GM12878 (cell line): ENCODE measurements at regions of chr6 and their contacts with region 1.

Region 1: DNA sequence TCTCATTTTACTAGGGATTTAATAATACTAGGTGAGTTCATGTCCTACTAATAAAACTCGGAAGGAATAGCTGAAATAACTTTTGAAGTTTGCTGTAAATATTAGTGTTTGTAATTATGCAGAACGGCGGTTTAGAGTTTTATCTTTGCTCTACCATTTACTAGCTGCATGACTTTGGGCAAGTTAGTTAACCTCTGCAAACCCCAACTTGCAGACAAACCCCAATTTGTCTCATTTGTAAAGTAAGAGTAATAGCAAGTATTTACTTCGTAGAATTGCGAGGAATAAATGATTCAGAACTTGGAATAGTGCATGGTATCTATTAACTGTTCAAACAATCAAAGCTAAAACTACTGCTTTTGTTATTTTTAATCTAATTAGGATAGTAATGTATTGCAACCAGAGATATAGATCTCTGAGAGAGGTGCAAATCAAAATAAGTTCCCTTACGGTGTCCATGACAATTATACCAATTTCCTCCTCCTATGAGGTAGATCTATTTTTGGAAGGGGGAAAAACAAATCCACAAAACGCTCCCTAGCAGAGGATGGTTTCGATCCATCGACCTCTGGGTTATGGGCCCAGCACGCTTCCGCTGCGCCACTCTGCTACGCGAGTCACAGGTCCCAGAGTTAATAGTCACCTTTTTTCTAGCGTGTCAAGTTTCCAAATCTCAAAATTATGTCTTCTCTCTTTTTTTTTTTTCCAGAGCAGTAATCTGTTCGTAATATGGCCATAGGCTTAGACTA is 35.1 kb upstream of the BTN3A2 start:
- DNase-seq: no peak
- ATAC-seq: peak; percentile 54
- H3K4me3 ChIP-seq: peak overlapping the region; percentile 83
- H3K27ac ChIP-seq: no peak overlapping the region
- H3K4me1 ChIP-seq: no peaks in the 10 kb centered on the region
- H3K27me3 ChIP-seq: no peaks in the 10 kb centered on the region
- CTCF ChIP-seq: no peak
- EP300 ChIP-seq: peak in 1 of 2 experiments; percentile 57; a peak in 1 of 4 replicates
- POLR2A ChIP-seq: no peak
- RAD21 ChIP-seq: no peak

Region 2: DNA sequence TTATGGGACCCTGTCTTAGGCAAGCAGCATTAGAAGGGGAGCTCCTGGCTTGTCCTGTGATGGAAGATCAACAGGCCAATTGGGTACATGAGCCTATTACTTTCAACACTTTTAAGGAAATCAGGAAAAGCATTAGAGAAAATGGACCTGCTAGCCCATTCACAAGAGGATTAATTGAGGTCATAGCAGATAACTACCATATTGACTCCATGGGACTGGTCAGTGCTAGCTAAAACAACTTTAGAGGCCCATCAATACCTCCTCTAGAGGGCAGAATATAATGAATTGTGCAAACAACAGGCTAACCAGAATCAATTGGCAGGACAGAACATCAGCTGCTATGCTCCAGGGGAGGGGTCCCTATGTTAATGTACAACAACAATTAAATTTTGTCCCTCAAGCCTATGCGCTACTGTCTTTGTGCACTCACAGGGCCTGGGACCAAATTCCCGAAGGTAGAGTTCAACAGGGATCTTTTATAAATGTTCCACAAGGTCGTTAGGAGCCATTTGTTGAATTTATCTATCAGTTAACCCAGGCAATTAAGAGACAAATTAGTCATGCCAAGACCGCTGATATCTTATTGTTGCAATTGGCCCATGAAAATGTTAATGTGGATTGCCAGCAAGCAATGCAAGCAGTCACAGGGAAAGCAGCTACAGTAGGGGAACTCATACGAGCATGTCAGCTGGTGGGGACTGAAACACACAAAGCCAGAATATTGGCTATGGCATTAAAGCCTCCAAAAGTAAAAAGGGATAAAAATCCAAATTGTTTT is 71.5 kb before region 1 on chr6:
- CTCF ChIA-PET with region 1: interaction called, 11 read pairs
- POLR2A ChIA-PET with region 1: no interaction called
- RAD21 ChIA-PET with region 1: interaction called, 5 read pairs
- SMC1A ChIA-PET with region 1: interaction called, 3 read pairs
- in situ Hi-C with region 1: no loop called
- intact Hi-C with region 1: no loop called
- DNase-seq: no peak
- ATAC-seq: peak; percentile 69
- H3K4me3 ChIP-seq: no peak overlapping the region
- H3K27ac ChIP-seq: no peak overlapping the region
- H3K4me1 ChIP-seq: peaks cover 2% of the 10 kb centered on the region; the same call in 1 of the 2 replicates
- H3K27me3 ChIP-seq: no peaks in the 10 kb centered on the region
- CTCF ChIP-seq: peak; percentile 23 to 34 (median 29); a peak in 4 of 6 replicates
- EP300 ChIP-seq: no peak
- POLR2A ChIP-seq: no peak
- RAD21 ChIP-seq: 0 out of 2 replicates have a peak, but pooled peaks have one; percentile 9

Region 3: GRCh38 chr6:26532699-26533531 is 203.0 kb after region 1 on chr6:
- CTCF ChIA-PET with region 1: interaction called, 6 read pairs
- POLR2A ChIA-PET with region 1: interaction called, 10 read pairs
- RAD21 ChIA-PET with region 1: interaction called, 7 read pairs
- SMC1A ChIA-PET with region 1: interaction called, 10 read pairs
- in situ Hi-C with region 1: no loop called
- intact Hi-C with region 1: no loop called
- DNase-seq: peak; percentile 99
- ATAC-seq: peak; percentile 59
- H3K4me3 ChIP-seq: peak overlapping the region; percentile 79
- H3K27ac ChIP-seq: peak overlapping the region; percentile 73
- H3K4me1 ChIP-seq: peaks cover 17% of the 10 kb centered on the region
- H3K27me3 ChIP-seq: no peaks in the 10 kb centered on the region
- CTCF ChIP-seq: no peak
- EP300 ChIP-seq: peak in 1 of 2 experiments; percentile 55; a peak in 1 of 4 replicates
- POLR2A ChIP-seq: no peak
- RAD21 ChIP-seq: no peak

Region 4: GRCh38 chr6:26537846-26538571 is 208.1 kb after region 1 on chr6 and contains the start of gene HMGN4:
- CTCF ChIA-PET with region 1: interaction called, 6 read pairs
- POLR2A ChIA-PET with region 1: interaction called, 10 read pairs
- RAD21 ChIA-PET with region 1: interaction called, 7 read pairs
- SMC1A ChIA-PET with region 1: interaction called, 10 read pairs
- in situ Hi-C with region 1: no loop called
- intact Hi-C with region 1: no loop called
- DNase-seq: peak; percentile 96
- ATAC-seq: peak; percentile 81
- H3K4me3 ChIP-seq: peak within 1 kb of the TSS; percentile 86
- H3K27ac ChIP-seq: peak within 1 kb of the TSS; percentile 99
- H3K4me1 ChIP-seq: peaks cover 14% of the 10 kb centered on the region
- H3K27me3 ChIP-seq: no peaks in the 10 kb centered on the region
- CTCF ChIP-seq: 0 out of 6 replicates have a peak, but pooled peaks of 1 of the 3 experiments have one; percentile 8
- EP300 ChIP-seq: peak in 1 of 2 experiments; percentile 74; a peak in 1 of 4 replicates
- POLR2A ChIP-seq: peak; percentile 84
- RAD21 ChIP-seq: no peak
- polyA plus RNA-seq, gene HMGN4: 26.7 to 31.2 TPM

Region 5: DNA sequence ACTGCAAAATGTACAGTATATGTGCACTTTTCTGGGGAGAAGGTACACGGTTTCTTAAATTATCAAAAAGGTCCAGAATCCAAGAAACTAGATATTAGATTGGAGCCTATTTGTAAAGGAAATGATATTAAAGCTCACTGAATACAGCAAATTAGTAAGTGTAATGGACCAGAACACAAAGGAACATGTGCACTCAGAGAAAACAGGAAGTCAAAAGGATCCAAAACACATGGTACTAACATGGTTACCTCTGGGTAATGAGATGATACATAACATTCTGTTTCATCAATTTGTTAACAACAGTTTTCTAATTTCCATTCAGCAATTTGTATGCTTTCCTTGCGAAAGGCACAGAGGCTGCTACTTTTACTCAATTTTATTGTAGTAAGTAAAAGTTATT is 310.9 kb after region 1 on chr6:
- CTCF ChIA-PET with region 1: no interaction called
- POLR2A ChIA-PET with region 1: no interaction called
- RAD21 ChIA-PET with region 1: no interaction called
- SMC1A ChIA-PET with region 1: no interaction called
- in situ Hi-C with region 1: no loop called
- intact Hi-C with region 1: no loop called
- DNase-seq: no peak
- ATAC-seq: no peak
- H3K4me3 ChIP-seq: no peak overlapping the region
- H3K27ac ChIP-seq: no peak overlapping the region
- H3K4me1 ChIP-seq: no peaks in the 10 kb centered on the region
- H3K27me3 ChIP-seq: no peaks in the 10 kb centered on the region
- CTCF ChIP-seq: no peak
- EP300 ChIP-seq: no peak
- POLR2A ChIP-seq: no peak
- RAD21 ChIP-seq: no peak

Region 6: GRCh38 chr6:27049863-27050781 is 720.2 kb after region 1 on chr6:
- CTCF ChIA-PET with region 1: no interaction called
- POLR2A ChIA-PET with region 1: no interaction called
- RAD21 ChIA-PET with region 1: no interaction called
- SMC1A ChIA-PET with region 1: no interaction called
- in situ Hi-C with region 1: no loop called
- intact Hi-C with region 1: no loop called
- DNase-seq: no peak
- ATAC-seq: no peak
- H3K4me3 ChIP-seq: no peak overlapping the region
- H3K27ac ChIP-seq: no peak overlapping the region
- H3K4me1 ChIP-seq: peaks cover 21% of the 10 kb centered on the region
- H3K27me3 ChIP-seq: no peaks in the 10 kb centered on the region
- CTCF ChIP-seq: no peak
- EP300 ChIP-seq: no peak
- POLR2A ChIP-seq: no peak
- RAD21 ChIP-seq: no peak